ENCODE measurements at regions of chr10 and their contacts with region 1.

Region 1: DNA sequence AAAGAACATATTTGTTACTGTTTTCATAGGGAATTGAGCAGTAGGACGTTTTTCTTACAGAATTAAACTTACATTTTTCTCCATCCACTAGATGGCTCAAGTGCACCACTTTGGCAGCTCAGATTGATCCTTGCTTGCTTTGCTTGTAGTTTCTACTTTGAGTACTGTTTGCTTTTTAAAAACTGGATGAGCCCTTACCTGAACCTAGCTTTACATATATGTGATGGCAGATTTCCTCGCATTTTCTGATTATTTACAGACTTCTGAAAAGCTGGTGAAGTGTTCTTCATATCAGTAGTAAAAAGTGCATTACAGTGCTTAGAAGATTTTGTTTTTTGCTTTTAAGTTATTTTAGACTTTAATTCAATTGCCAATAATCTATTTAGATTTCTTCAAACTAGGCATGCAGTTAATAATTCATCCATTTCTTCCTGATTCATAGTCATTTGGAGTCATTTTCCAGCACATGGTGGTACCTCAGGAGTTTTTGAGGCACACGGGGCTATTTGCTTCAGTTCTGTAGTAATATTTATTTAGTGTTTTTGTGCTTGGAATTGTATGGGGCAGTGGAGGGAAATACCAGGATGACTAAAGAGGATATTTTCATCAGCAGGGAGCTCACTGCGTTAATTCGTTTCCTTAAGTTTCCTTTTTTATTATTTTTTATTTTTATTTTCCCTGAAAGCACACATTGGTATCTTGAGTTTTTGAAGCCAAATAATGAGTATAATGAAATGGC is 57.3 kb downstream of the MAPK8 start:
- DNase-seq: no peak
- ATAC-seq: peak; percentile 74

Region 2: GRCh38 chr10:48255722-48256121 is 108.1 kb before region 1 on chr10:
- intact Hi-C with region 1: no loop called
- DNase-seq: no peak
- ATAC-seq: no peak

Region 3: GRCh38 chr10:48656241-48656913 is 292.6 kb after region 1 on chr10:
- intact Hi-C with region 1: loop called (anchors 10 kb)
- DNase-seq: peak; percentile 97
- ATAC-seq: peak; percentile 92

Measured in left ventricle myocardium superior (tissue), 1 donor.